ENCODE measurements at regions of chr19 and their contacts with region 1.

Region 1: DNA sequence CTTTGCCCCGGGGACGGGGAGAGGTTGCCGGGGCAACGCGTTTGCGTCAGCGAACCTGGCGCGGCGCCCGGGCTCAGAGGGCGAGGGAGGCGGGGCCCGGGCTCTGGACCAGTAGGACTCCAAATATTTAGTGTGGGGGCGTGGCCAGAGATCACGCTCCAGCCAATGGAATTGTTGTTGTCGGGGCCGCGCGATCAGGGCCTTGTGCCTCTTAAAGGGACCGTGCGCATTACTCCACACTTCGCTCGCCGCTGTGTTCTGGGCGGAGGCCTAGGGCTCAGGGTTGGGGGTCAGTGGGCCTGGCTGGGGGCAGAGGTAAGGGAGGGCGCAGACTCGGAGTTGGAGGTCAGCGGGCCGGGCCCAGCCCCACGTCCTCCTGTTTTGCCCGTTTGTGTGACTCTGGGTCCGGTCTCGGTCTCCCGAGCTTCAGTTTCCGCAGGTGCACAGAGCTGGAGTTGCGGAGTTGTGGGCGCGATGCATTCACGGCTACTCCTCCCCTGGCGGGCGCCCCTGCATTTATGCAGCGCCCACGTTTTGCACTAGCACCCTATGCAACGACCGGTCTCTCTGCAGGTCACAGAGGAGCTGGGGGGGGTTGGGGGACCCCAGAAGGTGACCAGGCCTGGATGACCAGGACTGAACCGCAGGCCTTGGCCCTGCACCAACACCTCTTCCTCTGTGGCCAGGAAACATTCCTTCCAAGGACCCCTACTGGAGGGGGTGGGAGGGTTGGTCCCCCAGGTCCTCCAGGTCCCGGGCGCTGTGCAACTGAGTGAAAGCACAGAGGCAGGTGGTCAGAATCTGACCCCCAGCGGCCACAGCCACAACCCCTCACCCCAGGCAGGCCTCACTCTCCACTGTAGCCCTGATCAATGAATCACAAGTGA is 10.7 kb upstream of the MKNK2 start:
- DNase-seq: peak; percentile 98 to 99
- ATAC-seq: peak; percentile 57 to 64
- H3K4me3 ChIP-seq: peak overlapping the region; percentile 65 to 96 (median 74)
- H3K27ac ChIP-seq: peak overlapping the region; percentile 95 to 100 (median 98)
- H3K4me1 ChIP-seq: peaks cover 42 to 57% of the 10 kb centered on the region in 2 donors
- H3K27me3 ChIP-seq: no peaks in the 10 kb centered on the region
- CTCF ChIP-seq: no peak
- POLR2A ChIP-seq: peak; percentile 88 to 95

Region 2: DNA sequence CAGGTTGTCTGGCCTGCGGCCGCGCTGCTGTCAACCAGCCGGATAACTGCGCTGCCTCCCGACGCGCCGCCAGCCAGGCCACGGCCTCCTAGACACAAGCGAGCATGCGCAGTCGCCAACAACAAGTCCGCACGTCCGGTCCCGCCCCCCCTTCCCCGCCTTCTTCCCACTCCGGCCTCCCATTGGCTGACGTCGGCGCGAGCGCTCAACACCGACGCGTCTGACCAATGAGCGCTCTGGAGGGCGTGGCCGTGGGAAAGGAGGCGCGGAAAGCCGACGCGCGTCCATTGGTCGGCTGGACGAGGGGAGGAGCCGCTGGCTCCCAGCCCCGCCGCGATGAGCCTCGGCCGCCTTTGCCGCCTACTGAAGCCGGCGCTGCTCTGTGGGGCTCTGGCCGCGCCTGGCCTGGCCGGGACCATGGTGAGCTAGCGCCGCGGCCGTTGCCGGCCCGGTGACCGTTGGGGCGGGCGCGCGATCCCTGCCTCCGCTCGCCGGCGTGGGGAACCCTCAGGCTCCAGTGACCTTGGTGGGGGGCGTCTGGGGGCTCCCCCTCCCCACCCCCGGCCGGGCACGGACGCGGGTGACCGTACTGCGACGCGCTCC is 957.9 kb before region 1 on chr19 and contains the start of gene GPX4:
- in situ Hi-C with region 1: no loop called
- intact Hi-C with region 1: loop called (anchors 10 kb)
- DNase-seq: peak; percentile 99
- ATAC-seq: peak; percentile 68 to 73
- H3K4me3 ChIP-seq: peak within 1 kb of the TSS; percentile 69 to 98 (median 83)
- H3K27ac ChIP-seq: peak within 1 kb of the TSS; percentile 95 to 100 (median 98)
- H3K4me1 ChIP-seq: peaks cover 42 to 47% of the 10 kb centered on the region in 2 donors
- H3K27me3 ChIP-seq: no peaks in the 10 kb centered on the region
- CTCF ChIP-seq: no peak
- POLR2A ChIP-seq: peak; percentile 92 to 99
- total RNA-seq, gene GPX4: 616 to 907 (median 819) TPM

Region 3: DNA sequence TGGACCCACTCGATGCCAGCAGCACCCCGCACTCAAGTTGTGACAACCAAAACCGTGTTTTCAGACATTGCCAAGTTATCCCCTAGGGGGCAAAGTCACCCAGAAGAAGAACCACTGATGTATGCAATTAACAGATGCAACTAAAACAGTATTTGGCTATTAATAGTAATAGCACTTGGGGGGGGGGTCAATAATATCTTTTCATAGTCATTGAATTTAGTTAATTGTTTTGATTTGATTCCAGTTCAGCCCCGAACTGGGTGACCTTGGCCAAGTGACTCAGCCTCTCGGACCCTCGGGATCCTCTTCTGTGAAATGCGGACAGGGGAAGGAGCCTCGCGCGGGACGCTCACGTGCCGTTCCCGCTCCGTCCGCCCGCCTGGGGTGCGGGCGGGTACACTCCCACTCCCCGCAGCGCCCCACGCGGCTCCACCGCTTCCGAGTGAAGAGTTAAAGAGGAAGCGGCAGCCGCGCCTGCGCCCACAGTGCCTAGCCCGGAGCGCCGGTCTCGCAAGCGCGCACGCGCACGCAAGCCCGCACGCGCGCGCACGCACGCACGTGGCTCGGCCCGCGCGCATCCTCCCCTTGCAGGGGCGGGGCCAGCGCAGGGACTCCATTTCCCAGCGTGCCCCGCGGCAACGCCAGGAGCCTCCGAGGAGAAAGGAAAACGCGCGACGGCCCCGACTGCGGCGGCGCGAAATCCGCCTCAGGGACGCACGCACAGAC is 654.8 kb before region 1 on chr19:
- in situ Hi-C with region 1: no loop called
- intact Hi-C with region 1: loop called (anchors 10 kb)
- DNase-seq: peak; percentile 97 to 99
- ATAC-seq: peak; percentile 76 to 84
- H3K4me3 ChIP-seq: peak overlapping the region; percentile 59 to 75 (median 70)
- H3K27ac ChIP-seq: peak overlapping the region; percentile 90 to 95 (median 92)
- H3K4me1 ChIP-seq: peaks cover 32 to 33% of the 10 kb centered on the region in 2 donors
- H3K27me3 ChIP-seq: no peaks in the 10 kb centered on the region
- CTCF ChIP-seq: peak in 4 of 5 experiments; percentile 24 to 46 (median 34)
- POLR2A ChIP-seq: peak in 1 of 2 donors; percentile 24

Region 4: DNA sequence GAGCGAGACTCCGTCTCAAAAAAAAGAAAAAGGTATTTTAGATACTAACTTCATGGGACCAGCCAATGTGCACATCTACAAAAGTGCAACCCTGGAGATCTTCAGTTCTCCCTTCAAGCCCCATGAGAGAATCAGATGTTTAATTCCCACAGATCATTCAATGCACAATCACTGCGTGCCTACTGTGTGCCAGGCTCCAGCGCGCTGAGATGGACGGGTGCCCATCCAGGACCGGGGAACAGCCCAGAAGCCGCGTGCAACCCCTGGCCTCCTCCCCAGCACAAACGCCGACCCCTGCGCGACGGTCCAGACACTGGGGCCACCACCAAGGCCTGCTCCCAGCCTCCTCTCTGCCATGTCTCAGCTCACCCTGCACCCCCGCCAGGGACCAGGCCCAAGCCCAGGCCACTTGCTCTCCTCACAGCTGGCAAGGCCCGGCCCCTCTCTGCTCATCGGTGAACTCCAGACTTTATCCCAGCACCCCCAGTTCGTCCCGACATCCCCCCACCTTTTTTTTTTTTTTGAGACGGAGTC is 51.5 kb before region 1 on chr19:
- in situ Hi-C with region 1: no loop called
- intact Hi-C with region 1: no loop called
- DNase-seq: no peak
- ATAC-seq: no peak
- H3K4me3 ChIP-seq: no peak overlapping the region
- H3K27ac ChIP-seq: no peak overlapping the region
- H3K4me1 ChIP-seq: peaks cover 9 to 20% of the 10 kb centered on the region in 2 donors
- H3K27me3 ChIP-seq: no peaks in the 10 kb centered on the region
- CTCF ChIP-seq: no peak
- POLR2A ChIP-seq: no peak

Region 5: DNA sequence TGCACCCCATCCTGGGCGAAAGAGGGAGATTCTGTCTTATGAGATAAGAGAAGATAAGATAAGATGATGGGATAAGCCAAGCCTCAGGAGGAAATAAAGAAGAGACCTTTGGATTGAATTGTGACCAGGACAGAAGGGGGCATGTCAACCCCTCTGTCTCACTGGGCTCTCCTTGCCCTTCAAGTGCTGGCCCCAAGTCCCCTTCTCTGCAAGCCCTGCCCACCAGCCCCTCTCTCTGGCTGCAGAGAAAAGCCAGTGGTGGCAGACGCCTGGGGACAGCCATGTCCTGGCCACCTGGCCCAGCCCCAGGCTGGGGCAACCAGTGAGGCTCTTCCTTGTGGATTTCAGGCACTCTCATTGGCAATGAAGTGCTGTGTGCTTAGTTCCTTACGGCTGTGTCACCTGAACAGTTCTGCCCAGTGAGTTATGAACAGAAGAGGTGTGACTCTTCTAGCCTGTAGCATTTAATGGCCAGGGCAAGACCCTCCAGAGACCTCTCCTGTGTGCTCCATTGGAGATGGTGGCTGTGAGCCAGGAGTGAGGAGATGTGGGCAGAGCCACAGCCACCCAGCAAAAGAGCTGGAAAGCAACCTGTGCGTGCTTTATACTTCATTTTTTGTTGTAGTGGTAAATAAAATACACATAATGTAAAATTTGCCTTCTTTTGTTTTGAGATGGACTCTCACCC is 40.1 kb before region 1 on chr19:
- in situ Hi-C with region 1: loop called (anchors 5 kb)
- intact Hi-C with region 1: no loop called
- DNase-seq: no peak
- ATAC-seq: no peak
- H3K4me3 ChIP-seq: no peak overlapping the region
- H3K27ac ChIP-seq: no peak overlapping the region
- H3K4me1 ChIP-seq: peaks cover 0 to 5% of the 10 kb centered on the region in 2 donors
- H3K27me3 ChIP-seq: no peaks in the 10 kb centered on the region
- CTCF ChIP-seq: no peak
- POLR2A ChIP-seq: no peak

Region 6: DNA sequence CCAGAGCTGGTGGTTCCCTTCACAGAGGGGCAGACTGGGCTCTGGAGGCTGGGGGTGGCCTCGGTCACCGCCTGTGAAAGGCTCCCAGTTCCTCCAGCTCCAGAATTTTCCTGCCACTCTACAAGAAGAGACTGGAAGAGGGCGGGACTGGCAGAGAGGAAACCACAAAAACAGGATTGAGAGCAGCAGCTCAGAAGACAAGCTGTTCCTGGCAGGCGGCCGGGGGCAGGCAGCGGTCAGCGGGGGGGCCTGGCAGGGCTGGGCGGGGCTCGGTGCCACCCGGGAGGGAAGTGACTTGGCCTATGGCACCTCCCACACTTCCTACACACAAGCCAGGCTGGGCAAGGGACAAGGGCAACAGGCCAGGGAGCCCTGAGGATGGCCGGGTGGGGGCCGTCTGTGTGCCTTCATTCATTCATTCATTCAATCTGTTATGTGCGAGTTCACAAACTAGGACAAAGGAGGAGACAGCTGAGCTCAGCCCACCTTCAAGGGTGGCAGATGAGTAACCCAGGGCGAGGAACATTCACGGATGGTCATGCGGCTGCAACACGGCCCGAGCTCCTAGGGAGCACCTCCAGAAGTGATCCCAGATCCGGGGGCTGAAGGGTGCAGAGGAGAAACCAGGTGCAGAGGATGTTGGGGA is 29.3 kb before region 1 on chr19:
- in situ Hi-C with region 1: loop called in 3 of 4 experiments (anchors 5 kb)
- intact Hi-C with region 1: loop called (anchors 1 kb)
- DNase-seq: peak; percentile 96 to 99
- ATAC-seq: peak; percentile 79 to 84
- H3K4me3 ChIP-seq: peak overlapping the region; percentile 36 to 45 (median 38)
- H3K27ac ChIP-seq: peak overlapping the region; percentile 96 to 100 (median 100)
- H3K4me1 ChIP-seq: peaks cover 15 to 26% of the 10 kb centered on the region in 2 donors
- H3K27me3 ChIP-seq: no peaks in the 10 kb centered on the region
- CTCF ChIP-seq: no peak
- POLR2A ChIP-seq: peak; percentile 46 to 88

Region 7: DNA sequence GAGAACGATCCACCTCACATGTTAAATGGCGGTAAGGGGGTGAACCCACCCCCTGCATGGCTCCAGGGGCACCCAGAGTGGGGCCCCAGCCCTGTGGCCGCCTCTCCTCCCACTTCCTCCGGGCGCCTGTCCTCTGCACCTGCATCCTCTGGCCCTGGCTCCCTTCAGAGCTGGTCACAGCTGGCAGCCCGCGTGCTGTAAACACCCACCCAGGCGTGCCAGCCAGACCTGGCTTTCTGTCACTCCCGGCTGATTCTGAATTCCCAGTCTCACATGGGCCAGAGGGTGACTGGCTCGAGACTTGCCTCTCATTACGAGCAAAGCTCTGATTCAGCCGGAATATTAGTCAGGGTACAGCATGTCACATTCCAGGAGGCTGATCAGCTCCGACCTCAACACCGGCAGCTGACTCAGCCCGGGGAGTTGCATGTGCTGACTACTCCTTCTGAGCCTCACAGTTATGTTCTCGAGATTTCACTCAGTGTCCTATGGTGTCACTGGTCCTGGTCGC is 565.6 kb after region 1 on chr19:
- in situ Hi-C with region 1: no loop called
- intact Hi-C with region 1: loop called (anchors 5 kb)
- DNase-seq: peak; percentile 89 to 93
- ATAC-seq: peak; percentile 93 to 96
- H3K4me3 ChIP-seq: no peak overlapping the region
- H3K27ac ChIP-seq: peak overlapping the region; percentile 81 to 94 (median 88)
- H3K4me1 ChIP-seq: peaks cover 19 to 24% of the 10 kb centered on the region in 2 donors
- H3K27me3 ChIP-seq: no peaks in the 10 kb centered on the region
- CTCF ChIP-seq: peak in 1 of 5 experiments; percentile 53
- POLR2A ChIP-seq: peak; percentile 83 to 92